Endothelial cell of umbilical vein (primary cell): ENCODE measurements at regions of chr13 and their contacts with region 1.

Region 1: GRCh38 chr13:34156841-34157365 is 339.0 kb downstream of the RFC3 start:
- DNase-seq: peak; percentile 99
- H3K4me3 ChIP-seq: peak overlapping the region in 1 of 3 experiments; percentile 44
- H3K27ac ChIP-seq: peak overlapping the region; percentile 95
- H3K4me1 ChIP-seq: peaks cover 68% of the 10 kb centered on the region
- H3K27me3 ChIP-seq: no peaks in the 10 kb centered on the region
- CTCF ChIP-seq: no peak
- POLR2A ChIP-seq: peak; percentile 58

Region 2: DNA sequence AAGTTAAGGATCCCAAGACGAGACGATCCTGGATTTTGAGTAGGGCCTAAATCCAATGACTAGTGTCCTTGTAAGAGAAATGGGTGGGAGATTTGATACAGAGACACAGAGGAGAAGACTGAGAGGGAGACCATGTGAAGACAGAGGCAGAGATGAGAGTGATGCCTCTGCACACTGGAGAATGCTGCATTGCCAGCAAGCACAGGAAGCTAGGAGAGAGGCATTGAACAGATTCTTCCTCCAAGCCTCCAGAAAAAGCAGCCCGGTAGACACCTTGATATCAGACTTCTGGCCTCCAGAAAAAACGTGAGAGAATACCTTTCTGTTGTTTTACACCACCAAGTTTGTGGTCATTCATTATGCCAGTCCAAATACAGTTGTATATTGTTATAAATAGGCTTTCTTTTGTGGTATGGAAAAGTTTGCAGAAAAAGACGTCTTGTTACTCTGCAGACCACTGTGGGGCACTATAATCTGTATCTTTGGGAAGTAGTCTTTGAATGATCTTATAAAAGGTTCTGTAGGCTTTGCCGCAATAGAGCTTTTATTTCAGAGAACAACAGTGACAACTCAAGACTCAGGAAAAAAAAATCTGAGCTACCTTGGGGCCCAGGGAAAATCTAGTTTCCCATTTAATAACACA is 356.8 kb before region 1 on chr13:
- CTCF ChIA-PET with region 1: interaction called, 11 read pairs
- POLR2A ChIA-PET with region 1: no interaction called
- dilution Hi-C with region 1: no loop called
- intact Hi-C with region 1: no loop called
- DNase-seq: peak; percentile 67
- H3K4me3 ChIP-seq: no peak overlapping the region
- H3K27ac ChIP-seq: no peak overlapping the region
- H3K4me1 ChIP-seq: no peaks in the 10 kb centered on the region
- H3K27me3 ChIP-seq: peaks cover 0 to 7% of the 10 kb centered on the region in 2 experiments
- CTCF ChIP-seq: peak; percentile 24 to 37
- POLR2A ChIP-seq: no peak

Region 3: DNA sequence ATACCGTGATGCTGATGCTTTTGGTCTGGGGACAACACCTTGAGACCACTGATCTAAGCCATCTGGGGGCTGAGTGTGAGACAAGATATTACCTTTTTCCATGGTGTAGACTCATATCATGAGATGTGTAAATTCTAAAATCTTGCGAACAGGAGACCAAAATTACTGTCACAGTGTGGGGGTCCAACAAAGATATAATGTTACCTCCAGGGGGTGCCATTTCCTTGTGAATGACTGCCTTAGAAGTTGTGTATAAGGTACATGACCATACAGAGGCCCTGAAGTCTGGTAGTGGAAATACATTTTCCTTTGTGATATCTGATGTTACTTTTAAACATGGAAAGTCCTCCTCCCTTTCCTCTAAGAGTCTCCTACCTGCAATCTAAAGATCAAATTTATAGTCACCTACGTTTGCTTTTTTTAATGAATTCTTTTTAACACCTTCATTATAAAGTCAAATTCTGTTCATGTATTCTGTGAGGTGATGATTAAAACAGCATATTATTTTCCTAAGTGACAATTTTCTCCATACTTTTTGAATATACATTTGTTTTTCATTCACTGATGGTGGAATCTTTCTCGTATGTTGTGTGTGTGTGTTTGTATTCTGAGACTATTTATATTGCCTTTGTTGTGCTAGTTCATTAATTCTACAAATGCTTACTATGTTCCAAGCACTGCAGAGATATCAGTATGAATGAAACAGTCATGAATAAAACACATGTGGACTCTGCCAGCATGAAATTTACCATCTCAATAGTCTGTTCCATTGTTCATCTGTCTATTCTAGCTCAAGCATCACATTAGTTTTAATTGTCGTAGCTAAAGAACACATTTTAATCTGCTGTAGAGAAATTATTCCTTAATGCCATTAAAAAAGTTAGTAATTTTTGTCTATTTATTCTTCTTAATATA is 225.2 kb before region 1 on chr13:
- CTCF ChIA-PET with region 1: interaction called, 5 read pairs
- POLR2A ChIA-PET with region 1: no interaction called
- dilution Hi-C with region 1: no loop called
- intact Hi-C with region 1: loop called (anchors 2 kb)
- DNase-seq: peak; percentile 39
- H3K4me3 ChIP-seq: no peak overlapping the region
- H3K27ac ChIP-seq: no peak overlapping the region
- H3K4me1 ChIP-seq: no peaks in the 10 kb centered on the region
- H3K27me3 ChIP-seq: no peaks in the 10 kb centered on the region
- CTCF ChIP-seq: peak in 1 of 2 donors; percentile 52
- POLR2A ChIP-seq: no peak

Region 4: DNA sequence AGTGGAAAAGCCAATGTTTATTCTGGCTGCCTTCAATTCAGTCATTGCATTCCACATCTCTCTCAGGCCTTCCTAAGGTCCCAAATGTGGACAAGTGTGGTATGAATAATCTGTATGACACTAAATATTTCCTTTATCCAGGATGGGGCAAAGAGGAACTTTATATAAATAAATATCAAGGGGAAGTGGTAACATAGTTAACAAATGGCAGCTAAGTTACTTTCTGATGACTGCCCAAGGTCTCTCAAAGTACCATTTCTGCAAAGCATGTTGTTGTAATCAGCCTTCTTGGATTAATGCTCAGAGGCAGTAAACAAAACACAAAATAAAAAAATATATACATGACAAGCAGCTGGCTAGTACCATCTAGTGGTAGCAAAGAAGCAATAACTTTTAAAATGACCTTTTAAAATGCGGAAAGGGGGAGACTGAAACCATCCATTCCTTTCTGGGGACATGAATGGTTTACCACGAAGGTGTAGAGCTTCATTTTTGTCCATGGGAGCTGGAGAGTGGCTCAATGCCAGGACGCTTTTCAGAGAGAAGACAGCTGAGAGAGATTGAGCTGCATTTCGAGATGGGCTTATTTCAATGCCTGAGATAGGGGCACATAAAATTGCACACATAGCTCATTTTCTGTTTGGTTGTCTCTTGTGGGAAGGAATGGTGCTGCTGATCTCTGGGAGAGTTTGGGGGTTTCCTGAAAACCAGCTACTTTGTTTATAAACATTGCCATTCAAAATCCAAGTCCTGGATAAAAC is 79.8 kb before region 1 on chr13:
- CTCF ChIA-PET with region 1: interaction called, 13 read pairs
- POLR2A ChIA-PET with region 1: no interaction called
- dilution Hi-C with region 1: no loop called
- intact Hi-C with region 1: loop called (anchors 1 kb)
- DNase-seq: peak; percentile 48
- H3K4me3 ChIP-seq: no peak overlapping the region
- H3K27ac ChIP-seq: no peak overlapping the region
- H3K4me1 ChIP-seq: peaks cover 14% of the 10 kb centered on the region
- H3K27me3 ChIP-seq: no peaks in the 10 kb centered on the region
- CTCF ChIP-seq: peak; percentile 40 to 41
- POLR2A ChIP-seq: no peak

Region 5: DNA sequence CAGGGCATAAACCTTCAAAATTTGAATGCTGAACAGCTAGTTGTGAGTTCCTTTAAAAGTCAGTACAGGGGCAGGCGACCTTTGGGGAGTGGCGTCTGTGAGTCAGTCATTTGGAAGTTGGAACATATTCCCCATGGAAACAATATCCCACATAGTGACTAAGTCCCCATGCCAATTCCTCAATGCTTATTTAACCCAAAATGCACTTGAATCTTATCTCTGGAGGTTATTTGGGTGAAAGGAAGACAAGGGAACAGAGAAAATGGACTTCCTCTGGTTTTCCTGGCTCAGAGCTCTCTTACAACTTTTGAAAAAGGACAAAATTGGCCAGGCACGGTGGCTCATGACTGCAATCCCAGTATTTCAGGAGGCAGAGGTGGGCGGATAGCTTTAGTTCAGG is 305.9 kb after region 1 on chr13:
- CTCF ChIA-PET with region 1: interaction called, 3 read pairs
- POLR2A ChIA-PET with region 1: no interaction called
- dilution Hi-C with region 1: no loop called
- intact Hi-C with region 1: loop called (anchors 5 kb)
- DNase-seq: peak; percentile 76
- H3K4me3 ChIP-seq: no peak overlapping the region
- H3K27ac ChIP-seq: no peak overlapping the region
- H3K4me1 ChIP-seq: peaks cover 29% of the 10 kb centered on the region
- H3K27me3 ChIP-seq: no peaks in the 10 kb centered on the region
- CTCF ChIP-seq: no peak
- POLR2A ChIP-seq: no peak